ENCODE measurements at regions of chr1 and their contacts with region 1.

Region 1: DNA sequence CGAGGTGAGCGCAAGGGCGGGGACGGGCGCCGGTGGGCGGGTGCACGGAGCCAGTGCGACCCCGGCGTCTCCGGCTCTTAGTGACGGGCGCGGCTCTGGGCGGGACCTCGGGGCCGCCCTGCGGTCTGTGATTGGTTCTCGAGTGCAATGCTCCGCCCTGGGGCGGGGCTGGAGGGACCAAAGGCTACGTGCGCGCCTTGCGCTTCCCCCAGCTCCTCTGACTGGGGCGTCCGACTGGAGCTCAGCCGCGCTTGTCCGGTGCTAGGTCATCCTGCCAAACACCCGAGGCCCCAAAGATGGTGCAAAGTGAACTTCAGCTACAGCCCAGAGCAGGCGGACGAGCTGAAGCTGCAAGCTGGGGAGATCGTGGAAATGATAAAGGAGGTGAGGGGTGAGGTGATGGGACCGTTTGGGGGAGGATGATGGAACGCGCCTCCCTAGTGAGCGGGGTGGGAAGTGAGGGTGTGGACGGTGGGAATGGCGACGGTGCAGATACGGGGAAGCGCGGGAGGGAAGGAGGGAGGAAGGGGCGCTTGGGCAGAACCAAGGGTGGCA is 811 bp downstream of the SH3D21 start:
- DNase-seq: peak; percentile 95
- ATAC-seq: peak; percentile 97
- H3K4me3 Mint-ChIP-seq: peak overlapping the region; percentile 93
- H3K27ac Mint-ChIP-seq: peak overlapping the region; percentile 92
- H3K4me1 Mint-ChIP-seq: peaks cover 32% of the 10 kb centered on the region
- H3K27me3 Mint-ChIP-seq: no peaks in the 10 kb centered on the region
- CTCF ChIP-seq: no peak

Region 2: DNA sequence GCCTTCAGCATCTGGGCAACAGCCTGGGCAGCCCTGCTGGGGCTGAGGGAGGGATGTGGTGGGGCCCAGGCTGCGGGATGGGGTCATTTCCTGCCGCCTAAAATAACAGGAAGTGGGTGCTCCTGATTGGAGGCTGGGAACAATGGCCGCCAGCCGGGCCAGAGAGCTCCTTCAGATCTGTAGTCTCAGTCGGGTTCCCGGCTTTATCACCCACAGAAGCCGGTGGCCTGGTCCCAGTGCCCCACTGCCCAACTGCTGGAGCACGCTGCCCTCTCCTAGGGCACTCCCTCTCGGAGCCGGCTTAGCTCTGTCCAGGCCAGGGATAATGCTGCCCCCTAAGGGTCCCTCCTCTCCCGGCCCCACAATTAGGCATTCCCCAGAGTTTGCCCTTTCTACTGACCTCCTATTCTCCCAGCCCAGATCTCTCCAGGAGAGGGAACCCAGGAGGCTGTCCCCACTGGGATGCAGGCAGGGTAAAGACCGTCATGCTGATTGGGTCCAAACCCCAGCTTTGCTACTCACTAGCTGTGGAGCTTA is 146.0 kb before region 1 on chr1:
- CTCF ChIA-PET with region 1: interaction called, 5 read pairs
- POLR2A ChIA-PET with region 1: interaction called, 10 read pairs
- intact Hi-C with region 1: no loop called
- DNase-seq: peak; percentile 88
- ATAC-seq: peak; percentile 56
- H3K4me3 Mint-ChIP-seq: peak overlapping the region; percentile 80
- H3K27ac Mint-ChIP-seq: peak overlapping the region; percentile 94
- H3K4me1 Mint-ChIP-seq: peaks cover 60% of the 10 kb centered on the region
- H3K27me3 Mint-ChIP-seq: no peaks in the 10 kb centered on the region
- CTCF ChIP-seq: no peak

Region 3: GRCh38 chr1:36269408-36269838 is 37.6 kb before region 1 on chr1:
- CTCF ChIA-PET with region 1: no interaction called
- POLR2A ChIA-PET with region 1: no interaction called
- intact Hi-C with region 1: no loop called
- DNase-seq: no peak
- ATAC-seq: no peak
- H3K4me3 Mint-ChIP-seq: no peak overlapping the region
- H3K27ac Mint-ChIP-seq: no peak overlapping the region
- H3K4me1 Mint-ChIP-seq: peaks cover 16% of the 10 kb centered on the region
- H3K27me3 Mint-ChIP-seq: no peaks in the 10 kb centered on the region
- CTCF ChIP-seq: no peak

Region 4: GRCh38 chr1:36323597-36324352 is 16.8 kb after region 1 on chr1 and contains the start of gene EVA1B:
- CTCF ChIA-PET with region 1: interaction called, 3 read pairs
- POLR2A ChIA-PET with region 1: interaction called, 89 read pairs
- intact Hi-C with region 1: no loop called
- DNase-seq: peak; percentile 68
- ATAC-seq: peak; percentile 43
- H3K4me3 Mint-ChIP-seq: peak within 1 kb of the TSS; percentile 75
- H3K27ac Mint-ChIP-seq: peak within 1 kb of the TSS; percentile 49
- H3K4me1 Mint-ChIP-seq: peaks cover 30% of the 10 kb centered on the region
- H3K27me3 Mint-ChIP-seq: peaks cover 5% of the 10 kb centered on the region
- CTCF ChIP-seq: no peak
- total RNA-seq, gene EVA1B: 5.8 to 6.5 TPM

Region 5: GRCh38 chr1:36358514-36359084 is 51.6 kb after region 1 on chr1:
- CTCF ChIA-PET with region 1: no interaction called
- POLR2A ChIA-PET with region 1: no interaction called
- intact Hi-C with region 1: no loop called
- DNase-seq: no peak
- ATAC-seq: no peak
- H3K4me3 Mint-ChIP-seq: no peak overlapping the region
- H3K27ac Mint-ChIP-seq: no peak overlapping the region
- H3K4me1 Mint-ChIP-seq: peaks cover 7% of the 10 kb centered on the region
- H3K27me3 Mint-ChIP-seq: no peaks in the 10 kb centered on the region
- CTCF ChIP-seq: no peak

Region 6: DNA sequence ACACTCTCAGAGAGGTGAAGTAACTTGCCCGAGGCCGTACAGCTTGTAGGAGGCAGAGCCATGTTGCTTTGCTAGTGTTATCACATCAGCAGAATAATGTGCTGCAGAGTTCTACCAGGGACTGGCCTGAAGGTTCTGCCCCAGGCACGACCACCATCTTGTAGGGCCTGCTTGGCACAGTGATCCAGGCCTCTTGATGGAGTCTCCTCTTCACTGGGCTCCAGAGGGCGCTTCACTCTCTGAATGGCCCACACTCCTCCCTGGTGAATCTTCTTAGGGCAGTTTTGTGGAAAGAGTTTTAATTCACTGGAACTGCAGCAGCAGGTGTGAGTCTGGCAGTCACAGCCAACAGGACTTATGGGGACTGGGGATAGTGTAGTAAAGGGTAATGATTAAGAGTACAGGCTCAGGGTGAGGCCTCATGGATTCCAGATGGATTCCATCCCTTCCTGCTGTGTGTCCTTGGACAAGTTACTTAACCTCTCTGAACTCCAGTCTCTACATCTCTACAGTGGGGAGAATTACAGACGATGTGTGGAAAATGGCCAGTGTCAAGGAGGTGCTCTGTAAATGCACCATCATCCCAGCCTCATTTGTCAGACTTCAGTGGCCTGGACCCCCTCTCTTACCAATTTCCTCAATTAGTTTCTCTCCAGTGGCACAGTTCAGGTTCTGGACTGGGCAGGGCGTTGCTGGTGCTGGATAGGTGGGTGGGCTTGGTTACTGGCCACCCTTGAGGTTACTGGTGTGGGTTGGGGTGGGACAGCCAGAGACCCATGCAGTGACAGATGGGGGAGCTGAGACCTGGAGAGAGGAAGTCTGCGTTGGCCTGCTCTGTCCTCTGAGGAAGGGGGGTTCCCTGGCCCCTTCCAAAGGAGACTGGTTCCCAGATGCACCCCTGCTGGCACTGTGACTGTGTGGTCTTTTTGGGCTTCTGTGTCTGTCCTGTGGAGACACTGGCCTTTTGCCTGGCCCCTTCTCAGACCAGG is 221.7 kb after region 1 on chr1:
- CTCF ChIA-PET with region 1: no interaction called
- POLR2A ChIA-PET with region 1: no interaction called
- intact Hi-C with region 1: no loop called
- DNase-seq: no peak
- ATAC-seq: no peak
- H3K4me3 Mint-ChIP-seq: no peak overlapping the region
- H3K27ac Mint-ChIP-seq: no peak overlapping the region
- H3K4me1 Mint-ChIP-seq: peaks cover 8% of the 10 kb centered on the region
- H3K27me3 Mint-ChIP-seq: peaks cover 3% of the 10 kb centered on the region
- CTCF ChIP-seq: no peak